AG04449 (cell line): ENCODE measurements at regions of chr9 and their contacts with region 1.

Region 1: GRCh38 chr9:125462861-125463291 is 201.2 kb downstream of the GAPVD1 start:
- DNase-seq: no peak
- H3K4me3 ChIP-seq: no peak overlapping the region
- CTCF ChIP-seq: no peak

Region 2: DNA sequence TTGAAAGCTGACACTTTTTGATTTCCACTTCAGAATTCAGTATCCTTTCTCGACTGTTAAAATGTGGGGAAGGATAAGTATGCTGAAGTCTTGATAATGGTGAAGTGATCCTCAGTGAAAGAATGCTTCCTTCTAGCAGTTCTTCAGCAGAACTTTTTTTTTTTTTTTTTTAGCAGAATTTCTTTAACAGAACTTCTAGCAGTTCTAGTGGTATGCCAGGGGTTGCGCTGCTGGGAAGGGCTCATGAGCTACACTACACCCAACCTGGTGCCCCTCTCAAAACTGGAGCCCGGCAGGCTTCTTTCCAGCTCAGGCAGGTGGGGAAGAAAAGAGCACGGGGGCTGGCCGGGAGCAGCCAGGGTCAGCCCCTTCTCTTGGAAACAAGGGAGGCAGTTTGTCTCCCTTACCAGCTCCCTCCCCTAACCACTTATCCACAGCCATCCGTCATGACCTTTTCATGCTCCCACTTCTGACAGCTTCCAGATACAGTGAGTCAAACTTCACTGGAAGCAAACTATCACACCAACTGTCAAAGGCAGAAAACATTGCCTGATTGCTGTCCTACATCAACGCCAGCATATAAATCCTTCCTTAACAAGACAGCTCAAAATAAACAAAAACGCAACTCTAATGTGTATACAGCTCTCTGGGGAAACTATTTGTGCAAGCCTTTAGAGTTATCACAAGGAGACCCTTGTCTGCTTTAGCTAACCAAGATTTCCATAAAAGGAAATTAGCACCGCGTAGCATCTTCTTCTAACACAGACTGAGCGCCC is 10.2 kb after region 1 on chr9:
- CTCF ChIA-PET with region 1: interaction called, 15 read pairs
- POLR2A ChIA-PET with region 1: no interaction called
- DNase-seq: peak; percentile 9
- H3K4me3 ChIP-seq: no peak overlapping the region
- CTCF ChIP-seq: no peak